Activated T-helper 1 cell treated with anti-CD3 and anti-CD28 coated beads, Interleukin-12 subunit alpha, Interleukin-12 subunit beta, Interleukin-2, Interleukin-4 antibody, amounts not matched to agents 30 ng/mL and 10 ng/mL and 1 ng/mL, durations not matched to agents 14 hours and 24 hours and 36 hours (primary cell): ENCODE measurements at regions of chr4 and their contacts with region 1.

Region 1: DNA sequence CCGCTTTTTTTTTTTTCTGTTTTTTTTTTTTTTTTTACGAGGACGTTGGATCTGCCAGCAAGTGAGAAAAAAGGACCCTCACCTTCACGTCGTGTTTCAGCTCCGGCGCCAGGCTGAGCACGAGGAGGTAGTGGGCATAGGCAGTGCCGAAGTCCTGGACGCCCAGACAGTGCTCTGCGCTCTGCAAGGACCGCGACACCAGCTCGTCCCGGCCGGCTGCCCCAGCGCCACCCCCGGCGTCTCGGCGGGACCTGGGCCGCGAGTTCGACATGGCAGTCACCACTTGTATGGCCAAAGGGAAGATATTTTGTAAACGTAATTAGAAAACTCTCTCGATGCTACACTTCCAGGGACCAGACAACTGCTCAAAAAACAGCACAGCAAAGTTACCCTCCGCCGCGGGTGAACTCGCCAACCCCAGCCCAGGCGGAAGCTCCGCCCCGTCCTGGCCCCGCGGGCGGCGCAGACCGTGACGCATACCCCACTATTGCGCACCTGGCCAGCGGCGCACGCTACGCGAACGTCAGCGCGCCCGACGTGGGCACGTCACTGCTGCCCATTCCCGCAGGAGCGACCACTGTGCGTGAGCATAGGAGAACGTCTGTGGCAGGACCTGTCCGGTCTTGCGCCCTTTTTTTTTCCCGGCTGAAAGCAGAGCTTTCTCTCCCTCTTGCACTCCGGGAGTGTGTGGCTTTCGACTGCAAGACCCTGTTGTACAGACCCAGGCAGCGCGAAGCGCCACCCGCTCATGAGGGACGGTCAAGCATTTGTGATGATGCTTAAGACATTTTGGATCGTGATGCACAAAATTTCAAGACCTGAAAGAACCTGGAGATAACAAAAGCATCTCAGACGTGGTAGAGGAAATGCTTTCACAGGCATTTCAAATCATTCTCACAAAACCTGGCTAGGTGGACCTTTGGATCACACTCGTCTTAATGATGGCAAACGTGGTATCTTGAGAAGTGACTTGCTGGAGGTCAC is at the start of gene PRMT9:
- DNase-seq: peak; percentile 85
- H3K4me3 Mint-ChIP-seq: peak within 1 kb of the TSS; percentile 92
- H3K27ac Mint-ChIP-seq: peak within 1 kb of the TSS; percentile 92
- H3K4me1 Mint-ChIP-seq: peaks cover 30% of the 10 kb centered on the region
- H3K27me3 Mint-ChIP-seq: peaks cover 9% of the 10 kb centered on the region
- total RNA-seq, gene PRMT9: 6.8 and 7.4 TPM in 2 replicates

Region 2: GRCh38 chr4:147707865-147708672 is 24.1 kb after region 1 on chr4:
- intact Hi-C with region 1: loop called (anchors 2 kb)
- DNase-seq: peak; percentile 17
- H3K4me3 Mint-ChIP-seq: no peak overlapping the region
- H3K27ac Mint-ChIP-seq: no peak overlapping the region
- H3K4me1 Mint-ChIP-seq: no peaks in the 10 kb centered on the region
- H3K27me3 Mint-ChIP-seq: peaks cover 4% of the 10 kb centered on the region

Region 3: DNA sequence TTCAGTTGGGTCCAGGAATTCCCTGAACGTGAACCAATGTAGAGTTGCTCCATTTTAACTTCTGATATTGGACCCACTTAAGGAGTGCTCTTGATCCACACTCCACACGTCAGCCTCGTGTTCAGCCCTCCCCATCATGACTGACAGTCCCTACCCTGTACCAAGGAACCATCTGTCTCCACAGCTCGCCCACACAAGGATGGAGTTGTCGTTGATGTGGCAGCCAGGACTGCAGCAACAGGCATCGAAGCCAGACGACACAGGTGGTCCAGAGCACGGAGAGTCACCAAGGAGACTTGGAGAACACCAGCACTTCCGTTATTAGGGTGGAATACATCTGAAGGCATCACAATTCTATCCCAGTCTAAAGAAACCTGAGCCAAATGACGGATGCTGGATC is 1230.3 kb after region 1 on chr4:
- intact Hi-C with region 1: no loop called
- DNase-seq: no peak
- H3K4me3 Mint-ChIP-seq: no peak overlapping the region
- H3K27ac Mint-ChIP-seq: no peak overlapping the region
- H3K4me1 Mint-ChIP-seq: no peaks in the 10 kb centered on the region
- H3K27me3 Mint-ChIP-seq: no peaks in the 10 kb centered on the region